Activated CD4-positive, alpha-beta memory T cell treated with anti-CD3 and anti-CD28 coated beads for 36 hours (primary cell): ENCODE measurements at regions of chr1 and their contacts with region 1.

Region 1: DNA sequence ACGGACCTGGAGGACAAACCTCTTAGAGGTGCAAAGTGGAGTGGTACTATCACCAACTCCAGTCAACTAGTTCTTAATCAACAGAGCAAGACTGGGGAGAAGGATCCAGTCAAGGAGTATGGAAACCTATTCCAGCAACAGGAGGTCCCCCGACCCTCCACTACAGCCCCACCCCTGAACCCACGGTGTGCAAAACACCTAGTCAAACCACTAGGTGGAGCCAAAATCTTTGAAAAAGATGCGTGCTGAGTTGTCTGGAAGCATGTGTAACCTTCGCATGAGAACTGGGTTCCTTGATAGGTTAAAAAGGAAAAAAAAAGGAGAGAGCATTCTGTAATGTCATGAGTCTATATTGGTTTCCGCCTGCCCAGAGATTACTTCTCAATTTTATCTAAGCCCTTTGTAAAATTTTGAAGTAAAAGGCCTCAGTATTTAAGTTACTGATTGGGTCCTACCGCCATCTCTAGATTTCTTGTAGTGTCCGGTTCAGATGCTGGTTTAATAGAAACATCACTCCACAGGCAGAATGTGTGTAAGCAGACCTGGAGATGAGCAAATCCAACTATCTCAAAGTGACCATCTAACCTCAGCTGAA is 81.9 kb upstream of the HAO2 start:
- DNase-seq: peak; percentile 25
- H3K4me3 Mint-ChIP-seq: no peak overlapping the region
- H3K27ac Mint-ChIP-seq: no peak overlapping the region
- H3K4me1 Mint-ChIP-seq: no peaks in the 10 kb centered on the region
- H3K27me3 Mint-ChIP-seq: peaks cover 7% of the 10 kb centered on the region

Region 2: GRCh38 chr1:119275145-119276134 is 11.2 kb before region 1 on chr1:
- CTCF ChIA-PET with region 1: interaction called, 11 read pairs
- POLR2A ChIA-PET with region 1: no interaction called
- intact Hi-C with region 1: no loop called
- DNase-seq: peak; percentile 46
- H3K4me3 Mint-ChIP-seq: no peak overlapping the region
- H3K27ac Mint-ChIP-seq: no peak overlapping the region
- H3K4me1 Mint-ChIP-seq: no peaks in the 10 kb centered on the region
- H3K27me3 Mint-ChIP-seq: peaks cover 3% of the 10 kb centered on the region

Region 3: DNA sequence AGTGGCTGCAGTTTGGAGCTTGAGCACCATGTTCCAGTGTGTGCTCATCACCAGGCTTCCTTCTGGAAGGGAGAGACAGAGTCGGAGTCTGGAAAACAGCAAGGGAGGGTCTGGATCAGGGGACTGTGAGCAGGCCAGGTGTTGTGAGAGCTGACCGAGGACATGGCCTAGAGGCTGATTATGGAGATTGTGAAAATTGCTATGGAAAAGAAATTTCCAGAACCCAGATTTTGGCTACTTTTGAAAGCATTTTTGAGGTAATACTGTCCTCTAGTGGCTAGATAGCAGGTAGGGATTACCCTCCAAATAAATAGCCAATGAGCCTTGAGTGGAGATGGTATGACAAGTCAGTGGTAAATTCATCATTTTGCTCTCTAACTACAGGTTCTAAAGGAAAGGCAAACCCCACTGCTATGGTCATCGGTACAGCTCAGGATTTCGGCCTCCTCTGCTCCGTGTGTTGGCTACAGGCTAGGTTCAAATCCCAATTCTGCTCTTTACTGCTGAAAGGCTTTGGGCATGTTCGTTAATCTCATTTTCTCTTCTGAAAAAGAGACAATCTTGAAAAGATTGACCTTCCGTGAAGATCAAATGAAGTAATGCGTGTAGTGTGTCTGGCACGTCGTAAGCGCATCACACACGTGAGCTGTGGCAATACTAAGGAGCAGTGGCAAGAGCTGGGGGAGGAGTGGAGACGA is 80.9 kb after region 1 on chr1:
- CTCF ChIA-PET with region 1: interaction called, 5 read pairs
- POLR2A ChIA-PET with region 1: no interaction called
- intact Hi-C with region 1: loop called (anchors 1 kb)
- DNase-seq: no peak
- H3K4me3 Mint-ChIP-seq: no peak overlapping the region
- H3K27ac Mint-ChIP-seq: no peak overlapping the region
- H3K4me1 Mint-ChIP-seq: no peaks in the 10 kb centered on the region
- H3K27me3 Mint-ChIP-seq: peaks cover 23% of the 10 kb centered on the region